Gastrocnemius medialis (tissue), 4 donors: ENCODE measurements at regions of chr3 and their contacts with region 1.

Region 1: DNA sequence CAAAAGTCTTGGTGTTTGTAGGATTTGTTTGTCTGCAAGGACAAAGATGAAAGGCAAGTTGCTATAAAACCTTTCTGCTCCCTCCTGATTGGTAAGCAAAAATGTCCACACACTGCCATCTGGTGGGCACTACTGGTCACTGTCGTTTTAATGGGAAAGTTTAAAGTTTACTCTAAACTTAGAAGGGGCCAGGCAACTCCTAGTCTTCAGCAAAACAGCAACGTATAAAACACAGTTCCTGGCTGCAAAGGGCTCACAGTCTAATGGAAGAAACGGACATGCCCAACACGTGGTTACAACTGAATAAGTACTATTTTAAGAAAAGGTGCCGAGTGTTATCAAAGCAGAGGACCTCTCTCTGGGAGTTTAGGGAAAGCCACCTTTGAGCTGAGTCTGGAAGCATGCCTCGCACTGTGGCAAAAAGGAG is 23.7 kb upstream of the TPRG1 start:
- DNase-seq: peak; percentile 25 to 49
- ATAC-seq: peak; percentile 64 to 76
- H3K4me3 ChIP-seq: no peak overlapping the region
- H3K27ac ChIP-seq: no peak overlapping the region
- H3K4me1 ChIP-seq: peaks cover 7 to 12% of the 10 kb centered on the region in 2 donors
- H3K27me3 ChIP-seq: no peaks in the 10 kb centered on the region
- CTCF ChIP-seq: peak; percentile 56 to 84 (median 80)
- POLR2A ChIP-seq: no peak

Region 2: DNA sequence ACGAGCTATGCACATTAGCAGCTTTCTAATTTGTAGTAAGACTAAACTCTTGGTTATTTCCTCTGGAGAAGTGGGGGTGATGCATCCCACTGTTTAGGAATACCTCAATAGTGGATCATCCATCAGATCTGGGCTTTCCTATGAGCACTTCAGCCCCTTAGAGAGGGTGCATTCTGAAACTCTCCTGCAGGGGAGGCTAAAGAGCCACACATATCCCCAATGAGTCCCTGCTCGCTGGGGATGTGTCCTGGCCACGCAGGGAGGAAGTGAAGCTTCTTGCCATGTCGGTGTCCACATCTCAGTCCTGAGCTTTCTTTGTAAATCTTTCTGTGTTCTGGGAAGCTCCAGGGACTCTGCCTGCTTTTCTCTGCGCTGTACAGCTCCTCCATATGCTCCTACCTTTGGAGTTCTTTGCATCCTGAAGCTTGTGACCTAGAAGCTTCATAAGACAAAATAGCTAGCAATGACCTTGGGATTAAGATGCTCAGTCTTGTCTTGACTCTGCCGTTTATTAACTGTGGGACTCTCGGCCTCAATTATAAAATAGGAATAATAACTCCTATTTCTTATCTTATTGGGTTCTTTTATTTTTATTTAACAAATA is 1828.3 kb before region 1 on chr3:
- in situ Hi-C with region 1: no loop called
- intact Hi-C with region 1: loop called (anchors 2 kb)
- DNase-seq: peak; percentile 12 to 50
- ATAC-seq: peak; percentile 63 to 83
- H3K4me3 ChIP-seq: no peak overlapping the region
- H3K27ac ChIP-seq: no peak overlapping the region
- H3K4me1 ChIP-seq: peaks cover 0 to 4% of the 10 kb centered on the region in 2 donors
- H3K27me3 ChIP-seq: no peaks in the 10 kb centered on the region
- CTCF ChIP-seq: peak; percentile 37 to 76 (median 62)
- POLR2A ChIP-seq: no peak

Region 3: DNA sequence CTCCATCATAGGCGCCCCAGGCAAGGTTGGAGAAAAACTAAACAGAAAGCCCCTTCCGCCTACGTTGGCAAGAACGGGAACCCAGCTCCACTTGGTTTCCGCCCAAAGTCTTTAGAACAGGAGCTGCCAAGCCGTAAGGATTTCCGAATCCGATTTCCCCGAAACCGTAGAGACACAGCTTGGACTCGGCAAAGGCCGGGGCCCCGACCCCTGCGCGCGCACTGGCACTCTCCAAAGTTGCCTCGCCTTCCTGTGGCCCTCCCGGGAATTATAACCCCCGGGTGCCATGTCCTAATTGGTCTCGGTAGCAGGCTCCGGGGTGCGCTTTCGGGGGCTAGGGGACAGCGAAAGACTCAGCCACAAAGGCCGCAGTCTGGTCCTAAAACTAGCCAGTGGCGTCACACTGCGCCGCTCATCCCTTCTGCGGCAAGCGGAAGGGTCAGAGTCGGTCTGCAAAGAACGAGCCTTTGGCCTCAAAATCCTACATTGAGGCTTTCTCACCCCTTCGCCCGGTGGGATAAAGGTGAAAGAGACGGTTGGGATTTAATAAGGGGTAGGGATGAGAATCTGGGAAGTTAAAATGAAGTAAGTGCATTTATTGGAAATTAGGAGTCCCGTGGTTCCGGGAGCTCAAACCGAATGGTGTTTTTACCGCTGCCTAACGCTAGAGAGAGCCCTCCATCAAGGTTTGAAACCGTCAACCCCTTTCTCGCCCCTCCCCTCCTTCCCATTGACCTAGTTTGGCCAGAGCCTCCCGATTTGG is 1409.6 kb before region 1 on chr3:
- in situ Hi-C with region 1: loop called in 1 of 4 experiments (anchors 10 kb)
- intact Hi-C with region 1: loop called (anchors 5 kb)
- DNase-seq: peak; percentile 92 to 93
- ATAC-seq: peak; percentile 34 to 37
- H3K4me3 ChIP-seq: peak overlapping the region; percentile 70 to 94 (median 88)
- H3K27ac ChIP-seq: peak overlapping the region; percentile 95 to 100 (median 98)
- H3K4me1 ChIP-seq: peaks cover 40% of the 10 kb centered on the region in 2 donors
- H3K27me3 ChIP-seq: no peaks in the 10 kb centered on the region
- CTCF ChIP-seq: peak; percentile 66 to 82 (median 72)
- POLR2A ChIP-seq: peak; percentile 54 to 64

Region 4: DNA sequence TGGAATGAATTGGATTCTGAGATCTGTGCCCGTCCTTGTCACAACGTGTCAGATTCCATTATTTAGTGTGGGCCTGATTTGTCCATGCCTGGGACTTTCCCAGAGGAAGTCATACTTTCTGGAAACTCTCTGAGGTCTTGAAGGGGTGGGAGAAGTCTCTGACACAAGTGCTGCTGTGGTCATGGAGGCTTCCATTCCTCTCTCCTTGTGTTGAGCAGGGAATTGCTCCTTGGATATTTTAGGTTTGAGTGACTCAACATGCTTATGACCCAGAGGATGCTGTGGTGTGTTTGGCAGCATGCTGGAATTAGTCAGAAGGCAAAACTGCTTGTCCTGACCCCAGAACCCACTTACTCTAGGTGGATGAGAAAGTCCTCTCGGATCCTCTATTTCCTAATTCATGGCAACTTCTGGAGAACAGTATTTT is 862.0 kb before region 1 on chr3:
- in situ Hi-C with region 1: loop called in 1 of 4 experiments (anchors 25 kb)
- intact Hi-C with region 1: loop called (anchors 10 kb)
- DNase-seq: peak; percentile 88 to 92
- ATAC-seq: peak; percentile 97 to 98
- H3K4me3 ChIP-seq: no peak overlapping the region
- H3K27ac ChIP-seq: peak overlapping the region; percentile 82 to 99 (median 90)
- H3K4me1 ChIP-seq: peaks cover 46 to 51% of the 10 kb centered on the region in 2 donors
- H3K27me3 ChIP-seq: no peaks in the 10 kb centered on the region
- CTCF ChIP-seq: no peak
- POLR2A ChIP-seq: peak; percentile 59 to 81

Region 5: DNA sequence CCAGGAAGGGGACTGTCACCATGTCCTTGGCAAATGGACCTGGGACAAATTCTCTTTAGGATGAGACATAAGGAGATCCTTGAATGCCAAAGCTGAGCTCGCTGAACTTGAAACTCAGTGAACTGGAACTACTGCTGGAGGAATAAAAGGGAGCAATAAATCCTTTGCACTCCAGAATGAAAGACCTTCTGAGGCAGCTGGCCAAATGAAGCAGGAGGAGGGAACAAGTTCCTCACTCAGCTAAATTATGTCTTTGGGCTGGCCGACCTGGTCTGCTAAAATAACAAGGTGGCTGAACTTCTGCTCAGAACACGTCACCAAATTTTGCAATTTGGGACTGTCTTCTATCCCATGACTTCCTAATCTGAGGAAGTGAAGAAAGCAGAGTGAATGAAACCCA is 679.4 kb before region 1 on chr3:
- in situ Hi-C with region 1: loop called in 1 of 4 experiments (anchors 25 kb)
- intact Hi-C with region 1: no loop called
- DNase-seq: peak; percentile 59 to 82
- ATAC-seq: peak; percentile 57 to 73
- H3K4me3 ChIP-seq: no peak overlapping the region
- H3K27ac ChIP-seq: peak overlapping the region; percentile 56 to 70 (median 58)
- H3K4me1 ChIP-seq: peaks cover 38 to 43% of the 10 kb centered on the region in 2 donors
- H3K27me3 ChIP-seq: no peaks in the 10 kb centered on the region
- CTCF ChIP-seq: no peak
- POLR2A ChIP-seq: no peak

Region 6: DNA sequence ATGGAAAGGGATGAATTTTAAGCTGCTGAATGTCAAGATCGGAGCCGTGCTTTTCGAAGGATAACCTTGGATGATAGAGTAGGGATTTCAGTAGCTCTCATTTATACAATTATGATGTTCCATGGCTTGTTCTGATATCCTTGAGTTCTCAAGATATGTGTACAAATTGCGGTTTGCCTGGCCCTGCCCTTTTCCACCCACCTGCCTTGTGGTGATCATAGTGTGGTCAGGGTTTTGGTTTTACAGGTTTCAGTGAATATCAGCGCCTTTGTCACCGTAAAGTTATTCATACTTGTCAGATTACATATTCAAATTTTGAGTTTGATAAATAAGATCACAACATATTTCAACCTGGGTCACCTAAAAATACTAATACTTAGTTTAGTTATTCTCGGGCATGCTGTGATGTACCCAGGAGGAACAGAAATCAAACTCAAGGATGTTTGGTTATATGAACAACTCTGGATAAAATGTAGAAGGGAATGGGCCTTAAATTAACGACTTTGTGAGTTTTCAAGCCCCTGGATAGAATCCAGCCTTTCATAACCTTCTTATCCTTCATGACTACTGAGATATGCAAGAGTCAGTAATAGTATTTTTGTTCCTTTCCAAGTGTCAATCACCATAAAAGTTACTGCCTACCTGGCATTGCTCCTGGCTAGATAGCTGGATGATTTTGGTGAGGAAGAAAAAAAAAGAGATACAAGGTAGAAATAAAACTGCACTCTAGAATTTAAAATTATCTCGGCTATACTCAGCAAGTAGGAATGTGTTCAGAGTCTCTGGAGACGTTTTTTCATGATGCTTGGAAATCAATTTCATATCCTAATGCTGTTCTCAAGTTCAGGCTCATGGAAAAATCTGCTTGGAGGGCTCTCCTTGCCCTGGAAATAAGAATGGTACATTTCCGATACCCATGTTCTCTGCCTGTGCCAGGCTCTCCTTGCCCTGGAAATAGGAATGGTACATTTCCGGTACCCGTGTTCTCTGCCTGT is 185.5 kb before region 1 on chr3:
- in situ Hi-C with region 1: loop called in 3 of 4 experiments (anchors 10 kb)
- intact Hi-C with region 1: loop called (anchors 5 kb)
- DNase-seq: no peak
- ATAC-seq: peak in 1 of 2 donors; percentile 8
- H3K4me3 ChIP-seq: no peak overlapping the region
- H3K27ac ChIP-seq: peak overlapping the region in 1 of 4 donors; percentile 5
- H3K4me1 ChIP-seq: peaks cover 6 to 10% of the 10 kb centered on the region in 2 donors
- H3K27me3 ChIP-seq: no peaks in the 10 kb centered on the region
- CTCF ChIP-seq: no peak
- POLR2A ChIP-seq: no peak

Region 7: DNA sequence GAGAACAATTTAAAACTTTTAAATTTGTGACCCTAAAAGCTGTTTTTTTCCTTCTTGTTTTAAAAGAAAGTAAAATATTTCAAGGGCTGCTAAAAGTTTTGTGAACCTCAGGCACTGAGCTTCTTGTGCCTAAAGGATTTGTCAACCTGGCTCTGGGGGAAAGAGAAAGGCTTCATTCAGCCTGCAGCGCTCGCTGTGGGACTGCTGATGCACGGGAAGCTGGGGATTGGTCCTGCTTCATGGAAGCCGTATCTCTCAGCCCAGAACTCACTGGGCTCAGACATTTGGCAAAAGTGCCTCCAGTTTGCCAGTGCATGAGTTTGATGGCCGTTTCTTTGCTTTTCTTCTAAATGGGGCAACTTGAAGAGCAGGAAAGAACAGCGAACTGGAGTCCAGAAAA is 54.5 kb after region 1 on chr3:
- in situ Hi-C with region 1: no loop called
- intact Hi-C with region 1: no loop called
- DNase-seq: no peak
- ATAC-seq: peak in 1 of 2 donors; percentile 53
- H3K4me3 ChIP-seq: no peak overlapping the region
- H3K27ac ChIP-seq: no peak overlapping the region
- H3K4me1 ChIP-seq: no peaks in the 10 kb centered on the region
- H3K27me3 ChIP-seq: no peaks in the 10 kb centered on the region
- CTCF ChIP-seq: no peak
- POLR2A ChIP-seq: no peak

Region 8: GRCh38 chr3:189212706-189213105 is 64.6 kb after region 1 on chr3:
- in situ Hi-C with region 1: no loop called
- intact Hi-C with region 1: no loop called
- DNase-seq: no peak
- ATAC-seq: no peak
- H3K4me3 ChIP-seq: no peak overlapping the region
- H3K27ac ChIP-seq: no peak overlapping the region
- H3K4me1 ChIP-seq: no peaks in the 10 kb centered on the region
- H3K27me3 ChIP-seq: no peaks in the 10 kb centered on the region
- CTCF ChIP-seq: no peak
- POLR2A ChIP-seq: no peak